Activated CD4-positive, alpha-beta memory T cell treated with anti-CD3 and anti-CD28 coated beads, Interleukin-2, amount 10 ng/mL, durations not matched to agents 7 days and 5 days (primary cell): ENCODE measurements at regions of chr20 and their contacts with region 1.

Region 1: DNA sequence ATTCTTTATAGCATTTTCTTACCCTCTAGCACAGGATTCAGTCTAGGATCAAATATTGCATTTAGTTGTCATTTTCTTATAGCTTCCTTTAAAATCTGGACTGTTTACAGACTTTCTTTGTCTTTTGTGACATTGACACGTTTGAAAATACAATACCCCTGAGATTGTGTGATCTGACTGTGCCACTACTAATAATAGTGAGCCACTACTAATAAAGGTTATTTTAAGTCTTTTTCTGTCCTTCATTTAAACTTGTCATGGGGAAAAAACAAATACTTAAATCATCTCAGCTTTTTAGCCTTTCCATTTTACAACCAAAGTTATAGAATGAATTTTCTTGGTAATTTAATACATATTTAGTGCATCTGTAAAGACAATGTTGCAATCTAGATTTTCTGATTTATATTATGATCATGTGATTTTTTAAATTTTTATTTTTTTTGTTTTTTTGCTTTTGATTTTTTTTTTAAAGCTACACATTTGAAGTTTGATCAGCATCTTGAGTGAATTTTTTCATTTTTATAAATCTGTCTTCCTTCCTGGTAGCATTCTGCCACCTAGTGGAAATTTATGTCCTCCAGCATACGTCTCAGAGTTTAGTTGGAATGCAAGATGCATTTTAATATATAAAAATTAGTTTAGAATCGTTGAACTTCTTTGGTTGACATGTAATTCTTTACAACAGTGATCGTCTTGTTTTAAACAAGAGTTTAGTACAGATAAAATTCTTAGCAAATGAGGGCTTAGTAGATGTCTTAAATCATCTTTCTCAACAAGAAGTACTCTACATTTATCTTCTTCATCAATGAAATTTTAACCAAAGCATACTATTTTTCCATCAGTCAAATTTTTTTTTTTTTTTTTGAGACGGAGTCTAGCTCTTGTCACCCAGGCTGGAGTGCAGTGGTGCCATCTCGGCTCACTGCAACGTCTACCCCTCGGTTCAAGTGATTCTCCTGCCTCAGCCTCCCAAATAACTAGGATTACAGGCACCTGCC is 119.4 kb downstream of the NCOA3 start:
- DNase-seq: no peak
- H3K4me3 Mint-ChIP-seq: no peak overlapping the region
- H3K27ac Mint-ChIP-seq: no peak overlapping the region
- H3K4me1 Mint-ChIP-seq: peaks cover 40% of the 10 kb centered on the region
- H3K27me3 Mint-ChIP-seq: no peaks in the 10 kb centered on the region

Region 2: DNA sequence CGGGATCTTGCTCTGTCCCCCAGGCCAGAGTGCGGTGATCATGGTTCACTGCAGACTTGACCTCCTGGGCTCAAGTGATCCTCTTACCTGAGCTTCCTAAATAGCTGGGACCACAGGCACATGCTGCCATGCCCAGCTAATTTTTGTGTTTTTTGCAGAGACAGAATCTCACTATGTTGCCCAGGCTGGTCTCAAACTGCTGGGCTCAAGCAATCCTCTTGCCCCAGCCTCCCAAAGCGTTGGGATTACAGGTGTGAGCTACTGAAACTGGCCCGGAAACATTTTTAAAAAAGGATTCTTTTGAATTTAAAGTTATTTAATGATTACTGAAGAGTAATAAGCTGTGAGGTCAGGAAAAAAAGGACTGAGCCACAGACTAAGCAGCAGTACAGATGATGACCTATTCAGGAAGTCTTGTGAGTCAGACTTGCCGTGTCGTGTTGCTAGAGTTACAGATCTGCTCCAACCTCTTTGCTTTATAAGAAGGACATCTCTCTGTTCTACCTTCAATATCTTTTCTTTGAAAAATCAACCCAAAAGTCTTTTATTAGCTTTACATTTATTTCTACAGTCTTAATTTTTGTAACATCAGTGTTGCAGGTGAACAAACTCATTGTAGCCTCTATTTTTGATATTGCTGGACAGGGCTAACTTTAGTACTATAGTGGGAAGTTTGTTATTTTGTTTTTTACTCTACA is 10.7 kb before region 1 on chr20:
- CTCF ChIA-PET with region 1: interaction called, 20 read pairs
- POLR2A ChIA-PET with region 1: interaction called, 3 read pairs
- DNase-seq: peak; percentile 85
- H3K4me3 Mint-ChIP-seq: peak overlapping the region; percentile 54
- H3K27ac Mint-ChIP-seq: peak overlapping the region; percentile 85
- H3K4me1 Mint-ChIP-seq: peaks cover 71% of the 10 kb centered on the region
- H3K27me3 Mint-ChIP-seq: no peaks in the 10 kb centered on the region

Region 3: DNA sequence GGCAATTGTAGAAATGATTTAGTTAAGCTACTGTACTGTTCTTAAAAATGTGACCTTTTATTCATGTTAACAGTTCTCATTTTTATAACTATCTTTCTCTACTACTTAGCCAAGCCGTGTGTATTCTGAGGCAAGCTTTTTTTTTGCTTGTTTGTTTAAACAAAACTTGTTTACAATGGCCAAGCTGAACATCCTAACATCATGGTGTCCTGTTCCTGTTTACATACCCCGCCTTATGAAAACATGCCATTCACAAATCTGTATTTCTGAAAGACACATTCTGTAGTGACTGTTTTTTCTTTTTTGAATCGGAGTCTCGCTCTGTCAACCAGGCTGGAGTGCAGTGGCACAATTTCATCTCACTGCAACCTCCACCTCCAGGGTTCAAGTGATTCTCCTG is 21.5 kb after region 1 on chr20:
- CTCF ChIA-PET with region 1: no interaction called
- POLR2A ChIA-PET with region 1: no interaction called
- DNase-seq: no peak
- H3K4me3 Mint-ChIP-seq: no peak overlapping the region
- H3K27ac Mint-ChIP-seq: no peak overlapping the region
- H3K4me1 Mint-ChIP-seq: no peaks in the 10 kb centered on the region
- H3K27me3 Mint-ChIP-seq: no peaks in the 10 kb centered on the region